ENCODE measurements at regions of chr1 and their contacts with region 1.

Region 1: GRCh38 chr1:22275721-22276395 is 133.0 kb upstream of the WNT4 start:
- DNase-seq: no peak
- H3K4me3 ChIP-seq: no peak overlapping the region
- H3K27ac ChIP-seq: no peak overlapping the region
- H3K4me1 ChIP-seq: no peaks in the 10 kb centered on the region
- H3K27me3 ChIP-seq: no peaks in the 10 kb centered on the region
- CTCF ChIP-seq: peak in 3 of 4 experiments; percentile 56 to 73 (median 57)
- EP300 ChIP-seq: no peak
- POLR2A ChIP-seq: no peak

Region 2: GRCh38 chr1:22105611-22106207 is 170.1 kb before region 1 on chr1:
- intact Hi-C with region 1: loop called (anchors 10 kb)
- DNase-seq: no peak
- H3K4me3 ChIP-seq: no peak overlapping the region
- H3K27ac ChIP-seq: no peak overlapping the region
- H3K4me1 ChIP-seq: peaks cover 0 to 77% (median 49%) of the 10 kb centered on the region in 4 donors
- H3K27me3 ChIP-seq: no peaks in the 10 kb centered on the region
- CTCF ChIP-seq: peak; percentile 54 to 85 (median 80)
- EP300 ChIP-seq: no peak
- POLR2A ChIP-seq: no peak